ENCODE measurements at regions of chr3 and their contacts with region 1.

Region 1: DNA sequence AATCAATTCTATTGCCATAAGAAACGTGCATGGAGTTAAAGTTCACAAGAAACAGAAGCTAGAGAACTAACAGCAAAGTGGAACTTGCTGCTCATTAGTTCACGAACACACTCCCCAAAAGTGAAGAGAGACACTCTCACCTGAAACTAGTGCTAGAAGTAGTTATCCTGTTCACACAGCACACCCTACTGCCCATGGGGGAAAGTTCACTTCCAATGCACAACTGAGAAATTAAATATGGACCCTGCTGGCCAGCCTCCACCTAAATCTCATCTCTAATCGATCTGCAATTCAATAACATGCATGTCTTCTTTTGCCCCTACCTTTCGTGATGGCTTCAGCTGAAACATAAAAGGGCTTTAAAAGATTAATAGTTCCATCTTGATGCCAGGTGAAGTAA is 39.4 kb upstream of the FRMD4B start:
- DNase-seq: no peak
- H3K4me3 ChIP-seq: no peak overlapping the region
- H3K27ac ChIP-seq: no peak overlapping the region
- H3K27me3 ChIP-seq: no peaks in the 10 kb centered on the region
- CTCF ChIP-seq: peak; percentile 46

Region 2: DNA sequence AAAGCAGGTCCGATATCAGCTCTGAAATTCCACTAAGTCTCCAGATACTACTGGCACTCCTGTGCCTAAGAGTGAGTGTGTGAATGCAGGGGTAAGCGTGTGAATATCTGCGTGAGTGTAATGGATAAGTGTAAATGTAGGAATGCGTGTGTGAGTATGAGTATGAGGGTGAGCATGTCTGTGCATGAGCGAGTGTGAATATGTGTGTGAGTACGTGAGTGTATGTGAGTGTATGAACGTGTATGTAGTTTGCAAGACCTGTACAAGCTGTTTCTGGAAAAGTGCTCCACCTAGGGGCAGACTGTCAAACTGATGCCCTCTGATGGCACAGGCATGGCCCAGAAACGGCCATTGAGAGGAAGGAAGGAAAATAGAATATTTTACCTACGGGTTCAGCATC is 15.0 kb before region 1 on chr3:
- CTCF ChIA-PET with region 1: interaction called, 14 read pairs
- POLR2A ChIA-PET with region 1: no interaction called
- DNase-seq: no peak
- H3K4me3 ChIP-seq: no peak overlapping the region
- H3K27ac ChIP-seq: no peak overlapping the region
- H3K27me3 ChIP-seq: no peaks in the 10 kb centered on the region
- CTCF ChIP-seq: peak; percentile 89

Region 3: GRCh38 chr3:69649120-69650065 is 224.1 kb after region 1 on chr3:
- CTCF ChIA-PET with region 1: no interaction called
- POLR2A ChIA-PET with region 1: no interaction called
- DNase-seq: no peak
- H3K4me3 ChIP-seq: no peak overlapping the region
- H3K27ac ChIP-seq: no peak overlapping the region
- H3K27me3 ChIP-seq: no peaks in the 10 kb centered on the region
- CTCF ChIP-seq: no peak

Measured in AG04450 (cell line).